ENCODE measurements at regions of chr1 and their contacts with region 1.

Region 1: GRCh38 chr1:156740679-156741612 is at the start of gene MRPL24:
- DNase-seq: peak; percentile 97
- H3K4me3 Mint-ChIP-seq: peak within 1 kb of the TSS; percentile 93
- H3K27ac Mint-ChIP-seq: peak within 1 kb of the TSS; percentile 94
- H3K4me1 Mint-ChIP-seq: peaks cover 54% of the 10 kb centered on the region
- H3K27me3 Mint-ChIP-seq: no peaks in the 10 kb centered on the region
- total RNA-seq, gene MRPL24: 132 and 135 TPM in 2 replicates

Region 2: GRCh38 chr1:156751758-156752757 is 11.1 kb after region 1 on chr1:
- intact Hi-C with region 1: loop called (anchors 1 kb)
- DNase-seq: peak; percentile 94
- H3K4me3 Mint-ChIP-seq: peak overlapping the region; percentile 97
- H3K27ac Mint-ChIP-seq: peak overlapping the region; percentile 94
- H3K4me1 Mint-ChIP-seq: peaks cover 55% of the 10 kb centered on the region
- H3K27me3 Mint-ChIP-seq: peaks cover 1% of the 10 kb centered on the region

Region 3: DNA sequence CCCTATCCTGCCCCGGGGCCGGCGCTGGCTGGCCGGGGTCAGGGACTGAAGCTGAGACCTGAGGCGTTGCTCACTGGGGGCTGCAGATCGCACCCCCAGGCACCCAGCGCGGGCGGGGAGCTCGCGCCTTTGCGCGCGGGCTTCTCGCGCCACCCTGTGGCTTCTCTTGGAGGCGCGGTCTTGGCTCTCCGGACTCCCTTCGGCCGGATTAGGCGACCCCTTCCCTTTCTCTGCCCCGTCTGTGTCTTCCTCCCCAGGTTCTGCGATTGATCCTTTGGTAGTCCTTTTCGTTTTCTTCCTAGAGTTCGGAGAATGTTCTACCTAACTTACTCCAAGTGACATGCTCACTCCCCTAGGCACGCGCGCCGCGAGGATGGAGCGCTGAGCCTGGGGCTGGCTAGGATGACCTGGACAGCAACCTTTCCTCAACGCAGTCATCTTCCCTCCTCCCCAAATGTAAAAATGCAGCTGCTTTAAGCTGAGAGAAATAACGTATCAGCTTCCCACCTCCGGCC is 119.2 kb after region 1 on chr1:
- intact Hi-C with region 1: no loop called
- DNase-seq: peak; percentile 53
- H3K4me3 Mint-ChIP-seq: peak overlapping the region; percentile 88
- H3K27ac Mint-ChIP-seq: peak overlapping the region; percentile 80
- H3K4me1 Mint-ChIP-seq: peaks cover 56% of the 10 kb centered on the region
- H3K27me3 Mint-ChIP-seq: peaks cover 15% of the 10 kb centered on the region

Region 4: GRCh38 chr1:157138220-157139051 is 397.5 kb after region 1 on chr1 and contains the start of gene ETV3:
- intact Hi-C with region 1: loop called (anchors 10 kb)
- DNase-seq: peak; percentile 89
- H3K4me3 Mint-ChIP-seq: peak within 1 kb of the TSS; percentile 93
- H3K27ac Mint-ChIP-seq: peak within 1 kb of the TSS; percentile 93
- H3K4me1 Mint-ChIP-seq: peaks cover 71% of the 10 kb centered on the region
- H3K27me3 Mint-ChIP-seq: no peaks in the 10 kb centered on the region
- total RNA-seq, gene ETV3: 47.6 and 51.3 TPM in 2 replicates